Dorsolateral prefrontal cortex (tissue), 120 donors: ENCODE measurements at regions of chr3 and their contacts with region 1.

Region 1: GRCh38 chr3:97940034-97940433 is 32.2 kb downstream of the RIOX2 start:
- DNase-seq: no peak
- H3K4me3 ChIP-seq: no peak overlapping the region
- H3K27ac ChIP-seq: no peak overlapping the region
- H3K27me3 ChIP-seq: no peaks in the 10 kb centered on the region
- CTCF ChIP-seq: peak in 19 of 56 donors; percentile 13 to 40 (median 22)

Region 2: DNA sequence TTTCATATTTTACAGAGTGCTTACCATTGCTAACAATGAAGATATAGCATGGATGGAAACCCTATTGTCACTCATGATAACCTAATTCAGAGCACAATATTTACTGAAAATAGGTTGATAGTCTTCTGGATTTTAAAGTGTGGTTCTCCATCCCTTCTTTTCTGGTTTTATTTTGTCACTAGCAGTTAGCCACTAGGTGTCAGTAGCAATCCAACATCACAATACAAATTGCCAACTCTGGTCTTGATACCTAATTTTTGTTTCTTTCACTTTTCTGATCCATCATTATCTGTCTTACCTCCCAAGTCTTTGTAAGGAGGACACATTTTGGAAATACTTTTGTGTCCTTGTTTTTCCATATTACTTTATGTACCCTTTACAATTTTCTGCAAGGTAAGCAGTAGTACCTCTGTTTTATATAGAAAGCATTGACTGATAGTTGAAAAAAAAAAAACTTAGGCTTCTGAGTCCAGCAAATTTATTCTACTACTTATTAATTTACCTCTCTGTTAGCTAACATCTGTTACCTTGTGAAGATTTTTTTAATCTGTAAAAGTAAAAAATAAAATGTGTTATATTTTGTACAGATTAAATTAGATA is 146.5 kb before region 1 on chr3:
- intact Hi-C with region 1: loop called in 1 of 2 experiments (anchors 5 kb)
- DNase-seq: no peak
- H3K4me3 ChIP-seq: no peak overlapping the region
- H3K27ac ChIP-seq: no peak overlapping the region
- H3K27me3 ChIP-seq: no peaks in the 10 kb centered on the region
- CTCF ChIP-seq: peak; percentile 74 to 99 (median 86)

Region 3: GRCh38 chr3:97910931-97911351 is 29.1 kb before region 1 on chr3:
- intact Hi-C with region 1: no loop called
- DNase-seq: no peak
- H3K4me3 ChIP-seq: no peak overlapping the region
- H3K27ac ChIP-seq: no peak overlapping the region
- H3K27me3 ChIP-seq: no peaks in the 10 kb centered on the region
- CTCF ChIP-seq: no peak